ENCODE measurements at regions of chr5 and their contacts with region 1.

Region 1: GRCh38 chr5:37837414-37838032 is 2.3 kb downstream of the GDNF start:
- DNase-seq: peak; percentile 71
- H3K4me3 ChIP-seq: peak overlapping the region; percentile 68
- H3K27ac ChIP-seq: no peak overlapping the region
- H3K4me1 ChIP-seq: peaks cover 55% of the 10 kb centered on the region
- H3K27me3 ChIP-seq: peaks cover 100% of the 10 kb centered on the region
- CTCF ChIP-seq: peak; percentile 85

Region 2: DNA sequence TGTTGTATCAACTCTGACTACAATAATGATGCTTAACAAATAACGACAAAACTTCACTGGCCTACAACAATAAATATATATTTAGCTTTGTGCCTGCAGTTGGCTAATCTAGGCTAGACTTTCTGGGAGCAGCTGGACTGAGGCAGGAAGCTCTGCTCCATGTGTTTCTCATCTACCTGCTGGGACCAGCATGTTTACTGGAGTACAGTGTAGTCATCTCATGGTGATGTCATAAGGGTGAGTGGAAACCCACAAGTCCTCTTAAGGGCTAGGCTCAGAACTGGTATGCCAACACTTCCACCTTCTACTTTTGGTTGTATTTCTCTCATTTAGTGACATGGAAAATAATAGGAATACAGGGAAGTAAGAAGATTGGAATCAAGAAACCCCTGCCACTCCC is 1046.7 kb before region 1 on chr5:
- intact Hi-C with region 1: no loop called
- DNase-seq: no peak
- H3K4me3 ChIP-seq: no peak overlapping the region
- H3K27ac ChIP-seq: no peak overlapping the region
- H3K4me1 ChIP-seq: no peaks in the 10 kb centered on the region
- H3K27me3 ChIP-seq: no peaks in the 10 kb centered on the region
- CTCF ChIP-seq: no peak

Region 3: GRCh38 chr5:36897616-36898015 is 939.9 kb before region 1 on chr5:
- intact Hi-C with region 1: no loop called
- DNase-seq: no peak
- H3K4me3 ChIP-seq: no peak overlapping the region
- H3K27ac ChIP-seq: no peak overlapping the region
- H3K4me1 ChIP-seq: peaks cover 69% of the 10 kb centered on the region
- H3K27me3 ChIP-seq: no peaks in the 10 kb centered on the region
- CTCF ChIP-seq: no peak

Region 4: DNA sequence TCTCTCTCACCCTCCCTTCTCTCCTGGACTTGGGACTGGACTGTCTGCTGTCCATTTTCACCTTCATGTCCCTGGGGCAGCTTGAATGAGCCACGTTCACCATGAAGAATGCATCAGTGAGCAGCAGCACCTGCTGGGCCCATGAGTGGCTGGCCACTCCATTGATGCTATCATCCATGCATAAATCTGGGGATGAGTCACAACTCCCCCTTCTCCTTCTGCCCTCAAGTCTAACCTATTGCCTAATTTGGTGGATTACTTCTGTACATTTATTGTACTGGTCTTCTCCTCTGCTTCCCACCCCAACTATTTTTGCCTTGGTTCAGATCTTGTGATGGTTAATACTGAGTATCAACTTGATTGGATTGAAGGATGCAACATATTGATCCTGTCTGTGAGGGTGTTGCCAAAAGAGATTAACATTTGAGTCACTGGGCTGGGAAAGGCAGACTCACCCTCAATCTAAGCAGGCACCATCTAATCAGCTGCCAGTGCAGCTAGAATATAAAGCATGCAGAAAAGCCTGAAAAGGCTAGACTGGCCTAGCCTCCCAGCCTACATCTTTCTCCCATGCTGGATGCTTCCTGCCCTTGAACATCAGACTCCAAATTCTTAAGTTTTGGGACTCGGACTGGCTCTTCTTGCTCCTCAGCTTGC is 44.4 kb before region 1 on chr5:
- intact Hi-C with region 1: no loop called
- DNase-seq: no peak
- H3K4me3 ChIP-seq: no peak overlapping the region
- H3K27ac ChIP-seq: no peak overlapping the region
- H3K4me1 ChIP-seq: no peaks in the 10 kb centered on the region
- H3K27me3 ChIP-seq: no peaks in the 10 kb centered on the region
- CTCF ChIP-seq: no peak

Region 5: GRCh38 chr5:38193015-38193581 is 355.6 kb after region 1 on chr5:
- intact Hi-C with region 1: loop called (anchors 5 kb)
- DNase-seq: peak; percentile 62
- H3K4me3 ChIP-seq: no peak overlapping the region
- H3K27ac ChIP-seq: no peak overlapping the region
- H3K4me1 ChIP-seq: no peaks in the 10 kb centered on the region
- H3K27me3 ChIP-seq: peaks cover 43% of the 10 kb centered on the region
- CTCF ChIP-seq: peak; percentile 90

Measured in left ventricle myocardium inferior (tissue), 1 donor.